Head of caudate nucleus (tissue), 42 donors: ENCODE measurements at regions of chr1 and their contacts with region 1.

Region 1: GRCh38 chr1:67053785-67054772 is at the start of gene SLC35D1:
- DNase-seq: peak; percentile 62 to 94 (median 86)

Region 2: DNA sequence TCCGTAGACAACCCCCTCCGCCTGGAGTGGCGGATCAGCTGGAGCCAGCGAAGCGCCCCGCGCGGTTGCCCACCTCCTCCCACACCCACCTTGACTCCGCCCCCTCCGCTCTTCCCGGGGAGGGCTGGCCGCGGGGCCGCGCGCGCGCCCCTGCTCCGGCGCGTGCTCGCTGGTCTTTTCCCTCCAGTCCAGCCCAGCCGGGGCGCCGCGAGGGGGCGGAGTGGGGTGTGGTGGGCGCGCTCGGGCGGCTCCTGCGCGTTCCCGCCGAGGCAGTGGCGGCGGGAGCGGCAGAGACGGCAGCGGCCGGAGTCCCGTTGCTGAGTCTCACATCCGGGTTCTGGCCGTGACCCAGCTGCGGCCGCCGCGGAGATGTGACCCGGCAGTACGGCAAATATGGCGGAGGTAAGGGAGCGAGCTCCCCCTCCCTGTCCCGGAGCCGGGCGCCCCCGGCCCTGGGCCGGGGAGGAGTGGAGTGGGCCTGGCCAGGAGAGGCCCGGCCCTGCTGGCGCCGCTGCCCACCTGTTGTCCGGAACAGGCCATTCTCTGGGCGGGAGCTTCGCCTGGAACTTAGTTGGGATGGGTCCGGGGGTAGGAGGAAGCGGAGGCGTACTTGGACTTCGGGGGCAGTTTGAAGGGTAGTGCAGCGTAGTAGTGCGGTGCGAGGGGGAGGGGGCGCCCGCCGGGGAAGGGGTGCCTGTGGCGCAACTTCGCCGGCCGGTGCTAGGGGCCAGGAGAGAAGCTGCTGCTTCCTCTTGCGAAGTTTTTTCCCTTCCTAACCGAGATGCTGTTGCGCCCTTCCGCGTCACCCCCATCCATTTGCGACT is 123.9 kb before region 1 on chr1:
- intact Hi-C with region 1: loop called (anchors 5 kb)
- DNase-seq: peak; percentile 77 to 97 (median 94)

Region 3: GRCh38 chr1:67013573-67013972 is 40.5 kb before region 1 on chr1:
- intact Hi-C with region 1: no loop called
- DNase-seq: peak in 6 of 42 donors; percentile 15 to 56 (median 31)

Region 4: DNA sequence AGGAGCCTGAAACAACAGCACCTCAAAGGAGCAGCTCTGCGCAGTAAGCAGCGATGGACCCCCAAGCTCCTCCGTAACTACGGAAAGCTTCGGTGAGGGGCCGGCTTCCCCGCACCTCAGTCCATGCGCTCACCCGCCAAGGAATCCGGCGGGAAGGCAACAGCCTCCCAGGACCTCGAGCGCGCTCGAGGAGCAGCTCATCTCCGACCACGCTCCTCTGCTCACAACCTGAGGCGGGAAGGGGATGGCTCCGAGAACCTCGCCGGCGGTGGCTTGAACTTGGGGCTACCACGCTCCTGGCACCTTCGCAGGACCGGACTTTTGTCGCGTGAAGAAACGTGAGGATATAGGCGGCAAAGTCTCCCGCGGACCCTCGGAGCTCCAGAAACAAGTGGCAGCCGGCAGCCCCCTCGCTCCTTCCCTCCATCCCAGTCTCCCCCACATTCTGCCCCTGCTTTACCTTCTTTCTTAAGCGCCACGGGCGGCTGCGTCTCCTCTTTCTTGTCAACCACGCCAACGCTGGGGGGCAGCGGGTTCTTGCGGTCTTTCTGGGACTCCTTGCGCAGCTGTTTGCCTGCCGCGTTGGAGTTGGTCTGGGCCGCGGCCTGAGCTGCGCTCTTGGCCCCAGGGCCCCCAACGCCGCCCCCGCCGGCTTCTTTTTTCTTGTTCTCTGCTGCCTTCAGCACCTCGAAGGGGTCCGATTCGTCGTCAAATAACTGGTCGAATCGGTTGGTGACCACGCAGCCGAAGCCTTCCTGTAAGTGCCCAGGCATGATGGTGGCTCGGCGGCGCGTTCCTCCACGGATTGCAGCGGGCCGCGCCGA is 375.7 kb after region 1 on chr1:
- intact Hi-C with region 1: loop called (anchors 10 kb)
- DNase-seq: peak in 41 of 42 donors; percentile 13 to 73 (median 51)